ENCODE measurements at regions of chr7 and their contacts with region 1.

Region 1: DNA sequence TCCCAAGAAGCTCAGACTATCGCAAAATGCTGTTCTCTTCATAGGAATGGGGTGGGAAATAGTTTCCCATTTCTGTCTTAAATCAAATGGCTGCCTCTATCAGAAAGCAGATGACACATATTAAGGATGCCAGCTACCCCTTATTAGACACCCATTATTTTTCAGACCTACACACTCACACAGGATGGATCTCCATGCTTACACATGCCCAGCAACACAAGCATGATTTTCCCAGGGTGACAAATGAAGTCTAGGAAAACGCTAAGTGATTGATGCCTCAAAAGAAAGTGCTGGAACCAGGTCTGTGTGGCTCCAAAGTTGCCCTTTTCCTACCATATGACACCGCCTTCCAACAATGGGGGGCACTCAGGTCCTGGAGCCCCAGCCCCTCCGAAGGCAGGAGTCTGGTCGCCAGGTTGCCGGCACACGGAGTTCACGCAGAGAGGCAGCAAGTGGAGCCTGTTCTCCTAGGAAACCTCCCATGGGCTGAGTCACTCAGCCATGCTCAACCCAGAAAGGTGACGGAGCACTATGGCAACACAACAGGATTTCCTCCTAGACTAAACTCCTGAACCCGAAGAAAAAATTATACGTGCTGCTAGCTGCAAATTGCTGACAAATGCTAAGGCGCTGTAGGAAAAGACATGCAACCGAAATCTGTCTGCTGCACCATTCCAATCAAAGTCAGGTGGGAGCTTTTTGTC is 19.8 kb downstream of the VOPP1 start:
- DNase-seq: peak; percentile 85
- H3K4me3 Mint-ChIP-seq: peak overlapping the region; percentile 67
- H3K27ac Mint-ChIP-seq: peak overlapping the region; percentile 88
- H3K4me1 Mint-ChIP-seq: peaks cover 95% of the 10 kb centered on the region
- H3K27me3 Mint-ChIP-seq: no peaks in the 10 kb centered on the region
- CTCF ChIP-seq: no peak

Region 2: DNA sequence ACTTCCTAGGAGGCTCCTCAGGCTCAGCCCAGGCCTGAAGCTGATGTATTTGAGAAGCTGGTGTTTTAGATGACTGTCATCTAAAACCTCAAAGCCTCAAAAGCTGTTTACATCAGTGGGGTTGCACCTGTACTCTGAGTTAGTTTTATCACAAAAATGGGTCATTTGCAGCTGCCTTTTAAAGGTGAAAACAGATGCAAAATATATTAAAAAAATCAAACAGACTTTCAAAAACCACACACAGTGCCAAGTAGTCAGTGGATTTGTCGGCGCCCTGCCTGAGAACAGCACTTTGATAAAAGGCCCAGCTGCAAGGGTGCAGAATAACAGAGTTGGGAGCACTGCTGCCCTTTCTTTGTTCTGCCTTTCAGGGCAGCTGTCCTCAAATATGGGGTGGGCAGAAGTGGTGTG is 83.2 kb before region 1 on chr7:
- CTCF ChIA-PET with region 1: no interaction called
- intact Hi-C with region 1: no loop called
- DNase-seq: no peak
- H3K4me3 Mint-ChIP-seq: no peak overlapping the region
- H3K27ac Mint-ChIP-seq: no peak overlapping the region
- H3K4me1 Mint-ChIP-seq: no peaks in the 10 kb centered on the region
- H3K27me3 Mint-ChIP-seq: no peaks in the 10 kb centered on the region
- CTCF ChIP-seq: no peak

Region 3: GRCh38 chr7:55571511-55572377 is 19.3 kb after region 1 on chr7:
- CTCF ChIA-PET with region 1: interaction called, 3 read pairs
- intact Hi-C with region 1: loop called (anchors 1 kb)
- DNase-seq: peak; percentile 74
- H3K4me3 Mint-ChIP-seq: peak overlapping the region; percentile 70
- H3K27ac Mint-ChIP-seq: peak overlapping the region; percentile 63
- H3K4me1 Mint-ChIP-seq: peaks cover 56% of the 10 kb centered on the region
- H3K27me3 Mint-ChIP-seq: no peaks in the 10 kb centered on the region
- CTCF ChIP-seq: peak; percentile 33